ENCODE measurements at regions of chr1 and their contacts with region 1.

Region 1: GRCh38 chr1:45230540-45230939 is 24.1 kb upstream of the ZSWIM5 start:
- DNase-seq: no peak
- ATAC-seq: peak; percentile 74
- H3K4me3 ChIP-seq: no peak overlapping the region
- H3K27ac ChIP-seq: no peak overlapping the region
- H3K4me1 ChIP-seq: no peaks in the 10 kb centered on the region
- H3K27me3 ChIP-seq: no peaks in the 10 kb centered on the region
- CTCF ChIP-seq: peak; percentile 24 to 43 (median 41); a peak in 4 of 6 replicates
- POLR2A ChIP-seq: no peak
- RAD21 ChIP-seq: peak; percentile 73

Region 2: GRCh38 chr1:44739361-44740178 is 491.0 kb before region 1 on chr1 and contains the start of gene KIF2C:
- CTCF ChIA-PET with region 1: no interaction called
- POLR2A ChIA-PET with region 1: no interaction called
- RAD21 ChIA-PET with region 1: no interaction called
- intact Hi-C with region 1: no loop called
- DNase-seq: peak; percentile 96
- ATAC-seq: peak; percentile 98
- H3K4me3 ChIP-seq: peak within 1 kb of the TSS; percentile 75 to 95
- H3K27ac ChIP-seq: peak within 1 kb of the TSS; percentile 65
- H3K4me1 ChIP-seq: peaks cover 5 to 23% of the 10 kb centered on the region in 2 experiments; a peak in 3 of 4 replicates
- H3K27me3 ChIP-seq: no peaks in the 10 kb centered on the region
- CTCF ChIP-seq: no peak
- POLR2A ChIP-seq: peak; percentile 98
- RAD21 ChIP-seq: no peak
- total RNA-seq, gene KIF2C: 92.6 TPM

Region 3: DNA sequence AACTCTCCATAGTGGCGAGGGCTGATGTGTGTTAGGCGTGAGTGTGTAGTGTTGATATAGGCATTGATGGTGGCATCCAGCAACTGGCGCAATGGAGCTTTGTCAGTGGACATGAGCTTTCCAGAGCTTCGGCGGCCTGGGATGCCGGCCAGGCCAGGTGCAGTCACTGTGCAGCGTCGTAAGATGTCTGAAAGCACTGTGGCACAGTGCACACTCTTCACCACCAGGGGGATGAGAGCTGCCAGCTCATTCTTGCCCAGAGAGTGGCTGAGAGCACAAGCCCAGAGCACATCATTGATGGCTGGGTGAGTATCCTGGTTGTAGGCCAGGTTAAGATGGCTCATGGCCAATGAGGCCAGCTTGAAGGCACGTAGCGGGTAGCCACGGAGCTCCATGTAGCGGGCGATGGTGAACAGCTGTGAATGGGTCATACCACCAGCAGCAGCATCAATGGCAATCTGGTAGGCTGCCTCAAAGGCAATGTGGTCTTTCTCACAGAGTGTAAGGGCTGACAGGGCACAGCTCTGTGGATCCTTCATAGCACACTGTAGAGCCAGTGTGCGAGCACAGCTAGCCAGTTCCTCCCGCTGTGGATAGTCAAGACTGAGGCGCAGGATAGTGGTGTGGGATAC is 211.8 kb before region 1 on chr1:
- CTCF ChIA-PET with region 1: no interaction called
- POLR2A ChIA-PET with region 1: no interaction called
- RAD21 ChIA-PET with region 1: no interaction called
- intact Hi-C with region 1: loop called (anchors 1 kb)
- DNase-seq: peak; percentile 41
- ATAC-seq: peak; percentile 96
- H3K4me3 ChIP-seq: no peak overlapping the region
- H3K27ac ChIP-seq: no peak overlapping the region
- H3K4me1 ChIP-seq: no peaks in the 10 kb centered on the region
- H3K27me3 ChIP-seq: no peaks in the 10 kb centered on the region
- CTCF ChIP-seq: peak; percentile 83 to 93 (median 84)
- POLR2A ChIP-seq: no peak
- RAD21 ChIP-seq: peak; percentile 86

Region 4: DNA sequence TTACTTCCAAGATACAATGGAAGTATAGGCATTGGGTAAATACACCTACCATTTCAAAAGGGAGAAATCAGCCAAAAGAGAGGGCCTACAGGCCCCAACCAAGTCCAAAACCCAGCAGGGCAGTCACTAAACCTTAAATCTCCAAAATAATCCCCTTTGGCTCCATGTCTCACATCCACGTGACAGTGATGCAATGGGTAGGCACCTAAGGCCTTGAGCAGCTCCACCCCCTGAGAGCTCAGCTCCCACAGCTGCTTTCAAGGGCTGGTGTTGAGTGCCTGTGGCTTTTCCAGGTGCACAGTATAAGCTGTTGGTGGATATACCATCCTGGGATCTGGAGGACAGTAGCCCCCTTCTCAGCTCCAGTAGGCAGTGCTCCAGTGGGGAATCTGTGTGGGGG is 146.0 kb before region 1 on chr1:
- CTCF ChIA-PET with region 1: no interaction called
- POLR2A ChIA-PET with region 1: no interaction called
- RAD21 ChIA-PET with region 1: no interaction called
- intact Hi-C with region 1: no loop called
- DNase-seq: no peak
- ATAC-seq: no peak
- H3K4me3 ChIP-seq: no peak overlapping the region
- H3K27ac ChIP-seq: no peak overlapping the region
- H3K4me1 ChIP-seq: no peaks in the 10 kb centered on the region
- H3K27me3 ChIP-seq: no peaks in the 10 kb centered on the region
- CTCF ChIP-seq: no peak
- POLR2A ChIP-seq: no peak
- RAD21 ChIP-seq: no peak

Measured in HCT116 (cell line).